ENCODE measurements at regions of chr2 and their contacts with region 1.

Region 1: GRCh38 chr2:42944779-42945415 is 152.5 kb upstream of the HAAO start:
- DNase-seq: no peak
- ATAC-seq: no peak
- H3K4me3 ChIP-seq: no peak overlapping the region
- H3K4me3 Mint-ChIP-seq: no peak overlapping the region
- H3K27ac ChIP-seq: no peak overlapping the region
- H3K27ac Mint-ChIP-seq: no peak overlapping the region
- H3K4me1 ChIP-seq: no peaks in the 10 kb centered on the region
- H3K4me1 Mint-ChIP-seq: peaks cover 3% of the 10 kb centered on the region
- H3K27me3 ChIP-seq: no peaks in the 10 kb centered on the region
- H3K27me3 Mint-ChIP-seq: no peaks in the 10 kb centered on the region
- CTCF ChIP-seq: no peak

Region 2: DNA sequence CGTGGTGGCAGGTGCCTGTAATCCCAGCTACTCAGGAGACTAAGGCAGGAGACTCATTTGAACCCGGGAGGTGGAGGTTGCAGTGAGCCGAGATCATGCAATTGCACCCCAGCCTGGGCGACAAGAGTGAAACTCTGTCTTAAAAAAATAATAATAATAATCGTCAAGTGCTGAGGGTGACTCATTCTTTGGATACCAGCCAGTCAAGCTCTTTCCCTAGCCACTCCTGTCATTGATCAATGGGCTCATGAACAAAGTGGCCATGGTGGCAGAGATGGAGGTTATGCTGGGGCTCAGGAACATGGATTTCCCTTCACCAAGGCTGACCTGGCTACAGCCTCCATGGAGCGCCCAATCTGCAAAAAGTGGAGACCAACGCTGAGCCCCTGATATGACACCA is 58.0 kb before region 1 on chr2:
- CTCF ChIA-PET with region 1: no interaction called
- POLR2A ChIA-PET with region 1: no interaction called
- intact Hi-C with region 1: no loop called
- DNase-seq: no peak
- ATAC-seq: no peak
- H3K4me3 ChIP-seq: no peak overlapping the region
- H3K4me3 Mint-ChIP-seq: no peak overlapping the region
- H3K27ac ChIP-seq: no peak overlapping the region
- H3K27ac Mint-ChIP-seq: no peak overlapping the region
- H3K4me1 ChIP-seq: no peaks in the 10 kb centered on the region
- H3K4me1 Mint-ChIP-seq: no peaks in the 10 kb centered on the region
- H3K27me3 ChIP-seq: no peaks in the 10 kb centered on the region
- H3K27me3 Mint-ChIP-seq: peaks cover 3% of the 10 kb centered on the region
- CTCF ChIP-seq: no peak

Region 3: DNA sequence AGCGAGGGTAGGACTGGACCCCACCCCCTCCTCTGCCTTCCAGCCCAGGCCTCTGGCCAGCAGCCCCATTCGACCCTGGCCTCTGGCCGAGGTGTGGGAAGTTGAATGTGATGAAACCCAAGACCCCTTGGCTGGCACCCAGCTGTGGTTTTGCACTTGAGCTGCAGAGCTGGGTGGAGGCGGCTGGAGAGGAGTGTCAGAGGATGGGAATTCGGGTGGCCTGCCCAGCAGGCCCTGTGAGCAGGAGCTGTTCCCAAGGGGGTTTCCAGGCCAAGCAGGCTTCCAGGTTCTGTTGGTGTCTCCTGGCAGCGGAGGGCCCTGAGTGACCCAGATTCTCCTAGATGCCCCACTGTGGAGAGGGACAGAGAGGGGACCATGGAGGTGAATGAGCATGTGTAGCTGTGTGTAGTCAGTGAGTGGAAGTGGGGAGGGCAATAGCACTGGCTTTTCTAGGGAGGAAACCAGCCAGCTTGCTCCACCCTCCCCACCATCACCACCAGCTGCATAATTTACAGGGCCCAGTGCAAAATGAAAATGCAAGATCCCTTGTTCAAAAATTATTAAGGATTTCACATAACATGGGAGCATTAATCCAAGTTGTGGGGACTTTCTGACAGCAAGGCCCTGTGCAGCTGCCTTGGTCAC is 19.7 kb after region 1 on chr2:
- CTCF ChIA-PET with region 1: interaction called, 11 read pairs
- POLR2A ChIA-PET with region 1: no interaction called
- intact Hi-C with region 1: no loop called
- DNase-seq: no peak
- ATAC-seq: no peak
- H3K4me3 ChIP-seq: no peak overlapping the region
- H3K4me3 Mint-ChIP-seq: no peak overlapping the region
- H3K27ac ChIP-seq: no peak overlapping the region
- H3K27ac Mint-ChIP-seq: no peak overlapping the region
- H3K4me1 ChIP-seq: peaks cover 18% of the 10 kb centered on the region
- H3K4me1 Mint-ChIP-seq: peaks cover 19% of the 10 kb centered on the region
- H3K27me3 ChIP-seq: no peaks in the 10 kb centered on the region
- H3K27me3 Mint-ChIP-seq: peaks cover 6% of the 10 kb centered on the region
- CTCF ChIP-seq: no peak

Region 4: GRCh38 chr2:42974721-42975717 is 30.1 kb after region 1 on chr2:
- CTCF ChIA-PET with region 1: interaction called, 16 read pairs
- POLR2A ChIA-PET with region 1: no interaction called
- intact Hi-C with region 1: no loop called
- DNase-seq: peak; percentile 27 to 79 (median 60)
- ATAC-seq: peak; percentile 78
- H3K4me3 ChIP-seq: no peak overlapping the region
- H3K4me3 Mint-ChIP-seq: no peak overlapping the region
- H3K27ac ChIP-seq: no peak overlapping the region
- H3K27ac Mint-ChIP-seq: no peak overlapping the region
- H3K4me1 ChIP-seq: peaks cover 8% of the 10 kb centered on the region
- H3K4me1 Mint-ChIP-seq: peaks cover 15% of the 10 kb centered on the region
- H3K27me3 ChIP-seq: no peaks in the 10 kb centered on the region
- H3K27me3 Mint-ChIP-seq: no peaks in the 10 kb centered on the region
- CTCF ChIP-seq: peak; percentile 71

Region 5: DNA sequence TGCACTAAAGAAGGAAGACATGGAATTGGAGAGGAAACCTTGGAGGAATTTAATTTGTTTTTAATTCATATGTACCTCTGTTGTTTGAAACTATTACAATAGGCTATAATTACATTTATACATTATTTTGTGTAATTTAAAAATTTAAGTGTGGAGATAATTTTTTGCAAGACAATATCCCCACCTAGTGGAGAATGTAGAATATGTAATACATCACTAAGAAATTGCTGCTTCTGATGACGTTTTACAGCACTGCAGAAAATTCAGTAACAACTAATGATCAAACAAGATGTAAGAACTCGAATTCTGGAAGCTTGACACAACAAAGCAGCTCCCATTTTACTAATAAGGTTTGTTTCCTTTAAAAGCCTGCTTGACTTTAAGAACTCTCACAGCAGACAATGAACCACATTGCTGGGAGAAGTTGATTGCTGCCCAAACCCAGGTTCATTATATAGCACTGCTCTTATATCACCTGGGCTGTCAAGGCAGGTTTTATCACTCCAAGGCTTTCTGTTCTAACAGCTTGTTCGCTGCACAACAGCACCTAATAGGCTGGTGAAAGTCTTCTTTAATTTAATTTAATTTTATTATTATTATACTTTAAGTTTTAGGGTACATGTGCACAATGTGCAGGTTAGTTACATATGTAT is 597.5 kb after region 1 on chr2:
- CTCF ChIA-PET with region 1: interaction called, 28 read pairs
- POLR2A ChIA-PET with region 1: no interaction called
- intact Hi-C with region 1: loop called (anchors 1 kb)
- DNase-seq: peak in 2 of 9 experiments; percentile 48 to 66
- ATAC-seq: peak; percentile 88
- H3K4me3 ChIP-seq: no peak overlapping the region
- H3K4me3 Mint-ChIP-seq: no peak overlapping the region
- H3K27ac ChIP-seq: no peak overlapping the region
- H3K27ac Mint-ChIP-seq: no peak overlapping the region
- H3K4me1 ChIP-seq: no peaks in the 10 kb centered on the region
- H3K4me1 Mint-ChIP-seq: peaks cover 16% of the 10 kb centered on the region
- H3K27me3 ChIP-seq: no peaks in the 10 kb centered on the region
- H3K27me3 Mint-ChIP-seq: no peaks in the 10 kb centered on the region
- CTCF ChIP-seq: peak; percentile 87

Region 6: DNA sequence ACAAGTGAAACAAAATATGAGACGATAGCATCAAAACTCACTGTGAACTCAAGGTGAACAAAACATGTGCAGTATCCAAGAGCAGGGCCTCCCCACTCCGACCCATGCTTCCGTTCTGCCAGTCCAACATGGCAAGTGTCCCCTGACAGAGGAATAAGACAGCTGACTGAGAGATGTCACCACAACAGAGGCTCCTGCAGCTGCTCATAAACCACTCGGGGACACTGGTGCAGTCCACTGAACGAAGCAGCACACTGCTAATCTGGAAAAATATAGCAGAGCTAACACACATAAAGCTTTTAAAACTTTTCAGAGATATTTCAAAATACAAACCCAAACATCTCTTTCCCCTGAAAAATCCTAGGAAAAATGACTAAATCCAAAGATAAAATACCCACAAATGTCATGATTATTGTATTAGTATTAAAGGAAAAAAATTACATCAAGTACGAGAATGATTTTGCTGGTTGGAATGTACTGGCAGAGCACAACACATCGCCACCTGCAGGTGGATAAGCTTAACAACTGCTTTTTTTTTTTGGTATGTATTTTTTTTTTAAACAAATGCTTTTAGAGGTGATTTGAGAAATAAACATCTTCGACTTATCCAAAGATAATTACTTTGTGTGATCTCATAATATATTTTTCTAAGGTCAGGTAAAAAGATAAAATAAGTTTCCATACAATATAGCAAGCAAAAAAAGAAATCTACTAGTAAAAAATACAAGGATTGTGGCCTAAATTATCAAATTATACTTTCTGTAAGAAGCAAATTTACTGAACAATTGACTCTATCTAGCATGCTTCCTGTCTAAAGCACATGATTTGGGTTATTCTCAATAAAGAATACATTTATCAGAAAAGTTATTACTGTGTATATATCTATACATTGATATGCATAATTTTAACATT is 632.3 kb after region 1 on chr2:
- CTCF ChIA-PET with region 1: interaction called, 26 read pairs
- POLR2A ChIA-PET with region 1: no interaction called
- intact Hi-C with region 1: loop called (anchors 1 kb)
- DNase-seq: peak in 4 of 9 experiments; percentile 20 to 74 (median 50)
- ATAC-seq: peak; percentile 63
- H3K4me3 ChIP-seq: no peak overlapping the region
- H3K4me3 Mint-ChIP-seq: no peak overlapping the region
- H3K27ac ChIP-seq: no peak overlapping the region
- H3K27ac Mint-ChIP-seq: no peak overlapping the region
- H3K4me1 ChIP-seq: no peaks in the 10 kb centered on the region
- H3K4me1 Mint-ChIP-seq: peaks cover 3% of the 10 kb centered on the region
- H3K27me3 ChIP-seq: no peaks in the 10 kb centered on the region
- H3K27me3 Mint-ChIP-seq: no peaks in the 10 kb centered on the region
- CTCF ChIP-seq: peak; percentile 86

Region 7: DNA sequence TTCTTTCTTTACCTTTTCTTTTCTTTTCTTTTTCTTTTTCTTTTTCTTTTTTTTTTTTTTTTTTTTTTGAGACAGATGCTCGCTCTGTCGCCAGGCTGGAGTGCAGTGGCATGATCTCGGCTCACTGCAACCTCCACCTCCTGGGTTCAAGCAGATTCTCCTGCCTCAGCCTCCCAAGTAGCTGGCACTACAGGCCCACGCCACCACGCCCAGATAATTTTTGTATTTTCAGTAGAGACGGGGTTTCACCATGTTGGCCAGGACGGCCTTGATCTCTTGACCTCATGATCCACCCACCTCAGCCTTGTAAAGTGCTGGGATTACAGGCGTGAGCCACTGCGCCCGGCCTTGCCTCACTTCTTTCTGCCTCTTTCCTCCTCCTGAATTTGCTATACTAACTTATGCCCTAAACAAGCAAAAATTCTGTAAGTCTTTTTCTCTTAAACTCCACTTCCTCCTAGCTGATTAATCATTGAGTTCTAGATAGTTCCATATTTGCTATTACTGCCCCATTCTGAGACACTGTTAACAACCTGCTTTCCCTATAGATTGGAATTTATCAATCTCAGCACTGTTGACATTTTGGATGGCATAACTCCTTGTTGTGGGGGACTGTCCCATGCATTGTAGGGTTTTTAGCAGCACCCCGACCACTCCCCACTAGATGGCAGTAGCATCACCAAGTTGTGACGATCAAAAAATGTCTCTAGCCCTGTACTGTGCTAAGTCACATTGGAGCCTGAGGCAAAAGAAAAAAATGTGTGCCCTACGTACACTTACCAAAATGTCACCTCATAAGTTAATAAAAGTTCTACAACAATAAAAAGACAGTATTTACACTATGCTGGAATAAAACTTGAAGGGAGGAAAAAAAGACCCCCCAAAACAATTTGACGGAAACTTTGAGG is 667.3 kb after region 1 on chr2:
- CTCF ChIA-PET with region 1: interaction called, 7 read pairs
- POLR2A ChIA-PET with region 1: no interaction called
- intact Hi-C with region 1: loop called (anchors 2 kb)
- DNase-seq: peak; percentile 52 to 81 (median 72)
- ATAC-seq: peak; percentile 99
- H3K4me3 ChIP-seq: no peak overlapping the region
- H3K4me3 Mint-ChIP-seq: no peak overlapping the region
- H3K27ac ChIP-seq: no peak overlapping the region
- H3K27ac Mint-ChIP-seq: no peak overlapping the region
- H3K4me1 ChIP-seq: no peaks in the 10 kb centered on the region
- H3K4me1 Mint-ChIP-seq: no peaks in the 10 kb centered on the region
- H3K27me3 ChIP-seq: no peaks in the 10 kb centered on the region
- H3K27me3 Mint-ChIP-seq: peaks cover 7% of the 10 kb centered on the region
- CTCF ChIP-seq: peak; percentile 74